ENCODE measurements at regions of chr7 and their contacts with region 1.

Region 1: GRCh38 chr7:33904681-33905388 is 504 bp upstream of the BMPER start:
- DNase-seq: peak; percentile 46 to 48
- ATAC-seq: peak; percentile 91 to 92
- H3K4me3 ChIP-seq: peak overlapping the region; percentile 67
- H3K27ac ChIP-seq: peak overlapping the region; percentile 87 to 95
- H3K4me1 ChIP-seq: peaks cover 34% of the 10 kb centered on the region
- CTCF ChIP-seq: no peak; the same call in 2 of the 3 replicates
- EP300 ChIP-seq: no peak
- POLR2A ChIP-seq: peak; percentile 30; the same call in 1 of the 2 replicates
- RAD21 ChIP-seq: peak; percentile 4 to 31; a peak in 1 of 5 replicates

Region 2: GRCh38 chr7:33677556-33677955 is 227.3 kb before region 1 on chr7:
- CTCF ChIA-PET with region 1: no interaction called
- POLR2A ChIA-PET with region 1: no interaction called
- DNase-seq: peak in 1 of 2 experiments; percentile 13
- ATAC-seq: no peak
- H3K4me3 ChIP-seq: no peak overlapping the region
- H3K27ac ChIP-seq: no peak overlapping the region
- H3K4me1 ChIP-seq: peaks cover 13% of the 10 kb centered on the region; the same call in 2 of the 3 replicates
- CTCF ChIP-seq: no peak
- EP300 ChIP-seq: peak in 1 of 2 experiments; percentile 79; a peak in 2 of 5 replicates
- POLR2A ChIP-seq: no peak
- RAD21 ChIP-seq: no peak; a peak in 1 of 5 replicates

Region 3: GRCh38 chr7:33921216-33921938 is 16.5 kb after region 1 on chr7:
- CTCF ChIA-PET with region 1: interaction called, 10 read pairs
- POLR2A ChIA-PET with region 1: no interaction called
- DNase-seq: no peak
- ATAC-seq: no peak
- H3K4me3 ChIP-seq: no peak overlapping the region
- H3K27ac ChIP-seq: no peak overlapping the region
- H3K4me1 ChIP-seq: no peaks in the 10 kb centered on the region
- CTCF ChIP-seq: no peak
- EP300 ChIP-seq: no peak
- POLR2A ChIP-seq: no peak
- RAD21 ChIP-seq: no peak